B cell (primary cell): ENCODE measurements at regions of chr17 and their contacts with region 1.

Region 1: DNA sequence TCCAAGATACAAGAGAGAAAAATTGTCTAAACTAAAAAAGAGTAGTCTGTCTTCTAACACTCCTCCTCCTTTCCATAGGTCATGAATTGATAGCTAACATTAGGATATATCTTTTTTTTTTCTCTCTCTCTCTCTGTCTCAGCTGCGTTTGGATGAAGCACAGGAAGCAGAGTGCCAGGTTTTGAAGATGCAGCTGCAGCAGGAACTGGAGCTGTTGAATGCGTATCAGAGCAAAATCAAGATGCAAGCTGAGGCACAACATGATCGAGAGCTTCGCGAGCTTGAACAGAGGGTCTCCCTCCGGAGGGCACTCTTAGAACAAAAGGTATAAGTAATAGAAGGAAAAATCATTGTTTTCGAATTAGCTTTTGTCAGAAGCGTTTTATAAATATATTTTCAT is 32.9 kb downstream of the ABHD15 start:
- DNase-seq: no peak
- ATAC-seq: no peak
- H3K4me3 ChIP-seq: no peak overlapping the region
- H3K4me3 Mint-ChIP-seq: no peak overlapping the region
- H3K27ac ChIP-seq: no peak overlapping the region
- H3K27ac Mint-ChIP-seq: no peak overlapping the region
- H3K4me1 ChIP-seq: no peaks in the 10 kb centered on the region
- H3K4me1 Mint-ChIP-seq: peaks cover 2% of the 10 kb centered on the region
- H3K27me3 ChIP-seq: no peaks in the 10 kb centered on the region
- H3K27me3 Mint-ChIP-seq: no peaks in the 10 kb centered on the region
- CTCF ChIP-seq: no peak

Region 2: GRCh38 chr17:29549177-29549923 is 15.4 kb after region 1 on chr17:
- CTCF ChIA-PET with region 1: interaction called, 11 read pairs
- POLR2A ChIA-PET with region 1: no interaction called
- intact Hi-C with region 1: no loop called
- DNase-seq: no peak
- ATAC-seq: no peak
- H3K4me3 ChIP-seq: no peak overlapping the region
- H3K4me3 Mint-ChIP-seq: no peak overlapping the region
- H3K27ac ChIP-seq: no peak overlapping the region
- H3K27ac Mint-ChIP-seq: no peak overlapping the region
- H3K4me1 ChIP-seq: no peaks in the 10 kb centered on the region
- H3K4me1 Mint-ChIP-seq: no peaks in the 10 kb centered on the region
- H3K27me3 ChIP-seq: no peaks in the 10 kb centered on the region
- H3K27me3 Mint-ChIP-seq: no peaks in the 10 kb centered on the region
- CTCF ChIP-seq: no peak

Region 3: DNA sequence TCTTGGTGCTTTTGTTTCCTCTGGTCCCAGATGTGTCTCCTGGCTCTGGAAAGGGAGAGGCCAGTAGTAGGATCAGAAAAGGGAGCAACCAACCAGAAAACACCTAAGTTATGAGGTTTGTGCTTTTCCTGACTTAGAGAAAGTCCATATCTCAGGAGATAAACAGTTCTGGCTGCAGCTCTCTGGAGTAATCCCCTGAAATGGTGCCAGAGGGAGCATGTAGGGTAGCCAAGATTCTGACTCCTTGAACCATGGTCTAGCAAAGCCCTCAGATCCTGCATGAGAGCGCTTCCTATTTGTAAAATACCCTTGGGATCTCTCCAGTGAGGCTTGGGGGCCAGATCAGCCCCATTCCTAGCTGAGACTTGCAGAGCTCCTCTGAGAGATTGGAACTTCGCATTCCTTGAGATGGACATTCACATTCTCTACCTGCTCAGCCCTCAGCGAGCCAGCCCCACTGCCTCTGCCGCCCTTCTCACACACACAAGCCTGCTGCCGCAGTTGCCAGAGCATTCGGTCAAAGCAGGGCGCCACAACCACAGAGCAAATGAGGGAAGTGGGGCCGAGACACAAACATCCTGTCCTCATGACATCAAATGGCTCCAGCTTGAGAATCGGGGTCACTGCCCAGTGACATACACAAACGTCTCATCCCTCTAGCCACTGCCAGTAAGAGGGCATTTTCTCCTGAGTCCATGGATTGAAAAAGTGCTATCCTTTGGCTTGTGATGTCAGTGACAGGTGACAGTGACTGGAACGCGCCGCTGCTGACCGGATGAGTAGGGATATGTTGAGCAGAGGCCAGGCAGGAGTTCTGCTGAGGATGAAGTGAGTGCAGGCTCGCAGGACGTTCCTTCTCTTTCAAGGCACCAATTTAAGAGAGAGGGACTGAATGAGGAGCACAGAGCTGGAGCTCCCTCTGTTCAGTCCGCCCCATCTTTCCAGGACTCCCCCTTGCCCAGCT is 27.9 kb after region 1 on chr17:
- CTCF ChIA-PET with region 1: interaction called, 12 read pairs
- POLR2A ChIA-PET with region 1: interaction called, 5 read pairs
- intact Hi-C with region 1: loop called (anchors 2 kb)
- DNase-seq: peak; percentile 71
- ATAC-seq: peak; percentile 36
- H3K4me3 ChIP-seq: peak overlapping the region in 1 of 5 experiments; percentile 47
- H3K4me3 Mint-ChIP-seq: peak overlapping the region; percentile 87
- H3K27ac ChIP-seq: peak overlapping the region; percentile 60 to 74
- H3K27ac Mint-ChIP-seq: peak overlapping the region; percentile 97
- H3K4me1 ChIP-seq: peaks cover 82 to 93% of the 10 kb centered on the region in 2 donors
- H3K4me1 Mint-ChIP-seq: peaks cover 77% of the 10 kb centered on the region
- H3K27me3 ChIP-seq: no peaks in the 10 kb centered on the region
- H3K27me3 Mint-ChIP-seq: no peaks in the 10 kb centered on the region
- CTCF ChIP-seq: no peak